Left colon (tissue), 2 donors: ENCODE measurements at regions of chr16 and their contacts with region 1.

Region 1: GRCh38 chr16:86195863-86196630 is 297.1 kb downstream of the IRF8 start:
- DNase-seq: no peak
- ATAC-seq: no peak

Region 2: DNA sequence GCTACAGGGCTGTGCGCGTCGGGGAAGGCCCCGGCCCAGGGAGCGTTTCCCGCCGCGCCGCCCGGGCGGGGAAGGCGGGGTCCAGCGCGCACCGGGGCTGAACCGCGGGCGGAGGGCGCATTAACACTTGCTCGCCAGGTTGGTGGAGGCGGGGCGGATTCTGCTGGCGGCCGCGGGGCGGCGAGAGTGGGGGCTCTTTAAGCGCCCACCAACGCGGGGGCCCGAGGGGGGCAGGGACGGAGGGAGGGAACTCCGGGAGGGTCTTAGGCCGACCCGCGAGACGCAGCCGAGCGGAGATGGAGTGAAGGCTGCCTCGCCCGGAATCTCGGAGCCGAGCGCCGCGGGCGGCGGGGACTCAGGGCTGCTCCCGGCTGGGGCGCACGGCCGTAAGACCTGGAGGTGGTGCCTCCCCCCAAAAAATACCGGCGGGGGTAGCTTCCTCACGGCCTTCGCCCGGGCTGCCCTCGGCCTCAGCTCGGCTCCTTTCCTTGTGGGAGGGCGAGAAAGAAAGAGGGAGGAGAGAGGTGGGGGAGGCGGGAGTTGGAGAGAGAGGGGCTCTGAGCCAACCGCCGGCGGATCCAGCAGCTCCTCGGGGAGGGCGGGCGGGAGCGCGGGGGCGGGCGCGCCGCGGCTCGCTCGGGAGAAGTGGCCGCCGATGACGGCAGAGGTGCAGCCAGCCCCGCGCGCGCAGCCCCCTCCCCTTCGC is 313.9 kb after region 1 on chr16:
- intact Hi-C with region 1: loop called in 1 of 2 experiments (anchors 5 kb)
- DNase-seq: peak; percentile 57 to 79
- ATAC-seq: peak; percentile 29